Common myeloid progenitor, CD34-positive (primary cell): ENCODE measurements at regions of chrX and their contacts with region 1.

Region 1: DNA sequence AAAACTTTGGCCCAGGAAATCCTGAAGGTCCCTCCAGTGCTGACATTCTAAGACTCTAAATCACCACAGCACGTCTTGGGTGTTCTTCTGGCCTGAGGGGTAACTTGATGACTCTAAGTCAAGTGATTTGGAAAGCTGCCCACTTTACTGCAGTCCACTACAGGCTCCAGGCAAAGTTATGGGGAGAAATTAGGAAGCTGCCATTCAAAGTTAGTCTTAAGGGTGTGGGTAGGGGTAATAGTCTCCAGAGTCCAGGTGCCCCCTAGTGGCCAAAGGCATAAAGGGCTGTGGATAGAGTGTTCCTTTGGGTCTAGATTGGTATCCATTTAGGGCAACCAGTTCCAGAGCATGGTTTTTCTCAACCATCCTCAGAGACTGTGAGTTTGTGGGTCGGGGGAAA is 38.7 kb upstream of the SLC16A2 start:
- DNase-seq: peak; percentile 58 to 85 (median 81)
- H3K4me3 ChIP-seq: no peak overlapping the region
- H3K27ac ChIP-seq: no peak overlapping the region
- H3K4me1 ChIP-seq: no peaks in the 10 kb centered on the region
- H3K27me3 ChIP-seq: no peaks in the 10 kb centered on the region

Region 2: GRCh38 chrX:74218895-74219294 is 163.7 kb before region 1 on chrX:
- CTCF ChIA-PET with region 1: no interaction called
- POLR2A ChIA-PET with region 1: no interaction called
- DNase-seq: no peak
- H3K4me3 ChIP-seq: no peak overlapping the region
- H3K27ac ChIP-seq: no peak overlapping the region
- H3K4me1 ChIP-seq: no peaks in the 10 kb centered on the region
- H3K27me3 ChIP-seq: peaks cover 0 to 2% (median 0%) of the 10 kb centered on the region in 5 experiments

Region 3: DNA sequence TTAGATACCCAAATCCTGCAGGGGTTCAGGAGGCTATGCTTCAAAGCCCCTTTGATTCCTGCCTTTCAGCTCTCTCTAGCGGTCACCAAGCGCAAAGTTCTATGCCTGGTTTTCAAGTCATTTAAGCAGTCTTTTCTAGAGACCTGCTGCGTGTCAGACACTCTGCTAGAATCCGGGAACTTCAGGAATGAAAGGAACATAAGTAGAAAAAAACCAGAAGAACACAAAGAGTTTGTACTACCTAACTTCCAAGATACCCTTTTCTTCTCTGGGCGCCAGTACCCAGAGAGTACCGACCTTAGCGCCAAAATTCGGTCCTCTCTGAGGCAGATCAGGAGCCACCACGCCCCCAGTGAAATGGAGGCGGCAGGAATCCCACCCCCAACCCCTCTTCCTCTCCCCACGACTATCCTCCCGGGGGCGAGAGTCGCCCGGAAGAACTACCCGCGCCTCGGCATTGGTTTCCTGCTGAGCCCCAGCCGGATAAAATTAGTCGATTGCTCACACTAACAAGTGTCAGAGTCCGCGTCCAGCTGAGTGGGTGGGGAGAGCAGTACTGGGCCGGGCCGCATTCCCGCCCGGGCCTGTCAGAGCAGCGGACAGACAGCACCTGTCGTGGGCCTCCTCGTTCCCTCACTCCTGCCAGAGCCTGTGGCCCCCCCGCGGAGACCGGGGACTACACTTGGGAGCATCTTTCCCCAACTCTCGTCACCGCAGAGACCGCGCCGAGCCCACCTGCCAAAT is 153.0 kb after region 1 on chrX:
- CTCF ChIA-PET with region 1: interaction called, 12 read pairs
- POLR2A ChIA-PET with region 1: no interaction called
- DNase-seq: peak; percentile 42 to 61 (median 54)
- H3K4me3 ChIP-seq: peak overlapping the region; percentile 50 to 84 (median 66)
- H3K27ac ChIP-seq: peak overlapping the region in 1 of 2 experiments; percentile 34
- H3K4me1 ChIP-seq: peaks cover 0 to 15% (median 9%) of the 10 kb centered on the region in 4 experiments
- H3K27me3 ChIP-seq: peaks cover 0 to 4% (median 0%) of the 10 kb centered on the region in 5 experiments

Region 4: GRCh38 chrX:74545880-74546523 is 163.4 kb after region 1 on chrX:
- CTCF ChIA-PET with region 1: interaction called, 22 read pairs
- POLR2A ChIA-PET with region 1: interaction called, 3 read pairs
- DNase-seq: no peak
- H3K4me3 ChIP-seq: no peak overlapping the region
- H3K27ac ChIP-seq: no peak overlapping the region
- H3K4me1 ChIP-seq: no peaks in the 10 kb centered on the region
- H3K27me3 ChIP-seq: peaks cover 0 to 5% (median 0%) of the 10 kb centered on the region in 5 experiments